ENCODE measurements at regions of chr19 and their contacts with region 1.

Region 1: DNA sequence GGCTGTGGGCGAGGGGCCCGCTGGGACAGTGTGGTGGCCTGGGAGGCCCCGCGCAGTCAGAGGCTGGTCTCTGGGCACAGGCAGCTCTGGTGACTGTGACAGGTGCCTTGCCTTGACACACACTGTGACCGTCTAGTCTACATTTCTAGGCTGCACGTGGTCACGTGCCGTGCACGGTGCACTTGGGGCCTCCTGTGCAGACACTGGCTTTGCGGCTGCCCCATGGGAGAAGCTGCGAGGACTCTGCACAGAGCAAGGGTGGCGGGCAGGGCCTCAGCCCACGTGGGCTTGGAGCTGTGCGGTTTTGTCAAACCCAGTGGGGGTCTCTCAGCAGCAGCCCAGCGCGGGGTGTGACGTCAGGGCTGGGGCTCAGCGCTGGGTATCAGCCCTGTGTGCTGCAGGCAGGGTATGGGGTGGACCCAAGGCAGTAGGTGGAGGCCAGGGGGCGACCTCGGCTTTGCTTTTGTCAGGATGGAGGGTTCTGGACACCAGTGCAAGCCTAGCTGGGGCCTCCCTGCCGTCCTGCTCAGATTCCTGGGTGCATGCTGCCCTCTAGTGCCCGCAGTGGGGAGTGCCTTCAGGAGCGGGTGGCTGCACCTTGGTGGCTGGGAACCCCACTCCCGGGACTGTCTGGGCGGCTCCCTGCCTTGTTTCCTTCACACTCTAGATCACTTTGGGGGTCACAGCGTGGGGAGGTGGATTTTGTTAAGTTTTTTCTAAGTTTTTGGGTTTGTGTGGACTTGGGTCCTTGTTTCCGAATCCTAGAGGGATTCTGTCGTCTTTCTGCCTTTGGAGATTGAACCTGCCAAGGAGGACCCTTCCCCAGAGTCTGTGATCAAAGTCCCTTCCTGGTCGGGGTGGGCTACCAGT is 62.6 kb downstream of the KDM4B start:
- DNase-seq: peak; percentile 85 to 92 (median 90)
- ATAC-seq: peak; percentile 97
- H3K4me3 ChIP-seq: no peak overlapping the region
- H3K27ac ChIP-seq: no peak overlapping the region
- H3K4me1 ChIP-seq: peaks cover 0 to 46% of the 10 kb centered on the region in 2 experiments; a peak in 3 of 5 replicates
- H3K27me3 ChIP-seq: no peaks in the 10 kb centered on the region
- CTCF ChIP-seq: peak; percentile 92 to 94 (median 94)
- EP300 ChIP-seq: no peak
- POLR2A ChIP-seq: no peak
- RAD21 ChIP-seq: peak; percentile 75 to 87

Region 2: GRCh38 chr19:5001615-5002014 is 29.9 kb before region 1 on chr19:
- CTCF ChIA-PET with region 1: interaction called, 3 read pairs
- POLR2A ChIA-PET with region 1: no interaction called
- in situ Hi-C with region 1: no loop called
- intact Hi-C with region 1: loop called (anchors 1 kb)
- DNase-seq: peak; percentile 66 to 76 (median 70)
- ATAC-seq: peak; percentile 92
- H3K4me3 ChIP-seq: no peak overlapping the region
- H3K27ac ChIP-seq: no peak overlapping the region
- H3K4me1 ChIP-seq: peaks cover 0 to 18% of the 10 kb centered on the region in 2 experiments; a peak in 2 of 5 replicates
- H3K27me3 ChIP-seq: no peaks in the 10 kb centered on the region
- CTCF ChIP-seq: peak; percentile 75 to 92 (median 80)
- EP300 ChIP-seq: no peak
- POLR2A ChIP-seq: no peak
- RAD21 ChIP-seq: peak in 1 of 2 experiments; percentile 56; a peak in 2 of 4 replicates

Region 3: DNA sequence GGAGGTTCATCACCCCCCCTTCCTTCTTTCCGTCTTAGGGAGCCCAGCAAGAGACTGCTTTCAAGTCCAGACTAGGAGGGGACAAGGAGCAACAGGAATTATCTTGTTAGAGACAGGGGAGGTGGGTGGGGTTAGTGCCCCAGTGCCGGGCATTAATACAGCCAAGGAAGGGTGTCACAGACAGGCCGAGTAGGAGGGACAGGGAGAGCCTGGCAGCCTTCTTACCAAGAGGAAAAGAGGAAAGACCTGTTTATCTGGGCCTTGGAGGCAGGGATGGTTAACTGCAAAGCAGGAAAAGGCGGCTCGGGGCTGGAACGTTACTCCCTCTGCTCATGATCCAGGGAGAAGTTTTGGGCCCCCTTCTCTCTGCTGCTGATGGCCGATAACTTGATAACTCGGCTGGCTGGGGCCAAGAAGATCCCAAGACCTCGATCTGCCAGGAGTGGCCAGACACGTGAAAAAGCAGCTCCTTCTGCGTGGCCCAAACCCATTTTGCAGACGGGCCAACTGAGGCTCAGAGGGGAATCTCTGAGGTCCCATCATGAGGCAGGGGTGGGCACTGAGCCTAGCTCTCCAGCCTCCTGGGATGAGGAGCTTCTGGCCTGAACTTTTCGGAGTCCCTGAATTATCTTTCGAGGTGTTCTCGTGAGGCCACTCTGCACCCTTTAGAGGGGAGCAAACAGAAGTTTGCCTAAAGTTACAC is 229.9 kb after region 1 on chr19:
- CTCF ChIA-PET with region 1: no interaction called
- POLR2A ChIA-PET with region 1: no interaction called
- in situ Hi-C with region 1: no loop called
- intact Hi-C with region 1: no loop called
- DNase-seq: no peak
- ATAC-seq: no peak
- H3K4me3 ChIP-seq: no peak overlapping the region
- H3K27ac ChIP-seq: no peak overlapping the region
- H3K4me1 ChIP-seq: peaks cover 0 to 17% of the 10 kb centered on the region in 2 experiments; a peak in 2 of 5 replicates
- H3K27me3 ChIP-seq: no peaks in the 10 kb centered on the region
- CTCF ChIP-seq: no peak
- EP300 ChIP-seq: no peak
- POLR2A ChIP-seq: no peak
- RAD21 ChIP-seq: no peak